HepG2 (cell line): ENCODE measurements at regions of chr3 and their contacts with region 1.

Region 1: GRCh38 chr3:78562328-78562727 is 1205.5 kb downstream of the ROBO1 start:
- DNase-seq: no peak
- ATAC-seq: no peak
- H3K4me3 ChIP-seq: no peak overlapping the region
- H3K27ac ChIP-seq: no peak overlapping the region
- H3K4me1 ChIP-seq: no peaks in the 10 kb centered on the region
- H3K27me3 ChIP-seq: no peaks in the 10 kb centered on the region
- CTCF ChIP-seq: no peak
- EP300 ChIP-seq: no peak
- POLR2A ChIP-seq: no peak
- RAD21 ChIP-seq: no peak

Region 2: DNA sequence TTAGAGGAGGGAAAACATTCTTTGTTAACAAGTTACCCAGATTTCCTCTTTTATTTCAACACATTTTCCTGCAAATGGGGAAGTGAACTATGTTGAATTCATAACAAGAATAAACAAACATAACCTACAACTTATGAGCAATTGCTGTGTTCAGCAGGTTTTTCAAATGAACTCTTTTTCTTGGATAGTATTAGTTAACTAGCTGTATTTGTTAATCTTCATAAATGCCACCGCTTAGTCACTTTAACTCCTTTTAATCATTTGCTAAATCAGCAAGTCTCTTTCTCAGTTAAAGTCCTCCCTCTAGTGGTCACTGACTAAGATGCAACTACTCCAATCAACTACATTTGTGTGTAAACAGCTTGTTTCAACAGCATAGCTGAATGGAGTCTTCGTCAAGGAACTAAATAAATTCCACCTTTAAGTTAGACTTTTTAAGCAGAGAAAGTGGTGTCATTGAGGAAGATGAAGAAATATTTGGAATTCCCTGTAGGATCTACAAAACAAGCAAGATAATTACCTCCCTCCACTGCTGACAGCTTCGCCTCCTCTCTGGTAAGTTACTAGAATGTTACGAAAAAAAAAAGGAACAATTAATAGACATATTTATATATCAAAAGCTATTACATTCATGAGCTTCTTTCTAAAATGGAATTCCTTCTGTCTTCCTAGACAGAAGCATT is 83.4 kb after region 1 on chr3:
- CTCF ChIA-PET with region 1: no interaction called
- POLR2A ChIA-PET with region 1: no interaction called
- in situ Hi-C with region 1: no loop called
- intact Hi-C with region 1: loop called (anchors 1 kb)
- DNase-seq: peak; percentile 78
- ATAC-seq: peak; percentile 84
- H3K4me3 ChIP-seq: no peak overlapping the region
- H3K27ac ChIP-seq: no peak overlapping the region
- H3K4me1 ChIP-seq: no peaks in the 10 kb centered on the region
- H3K27me3 ChIP-seq: no peaks in the 10 kb centered on the region
- CTCF ChIP-seq: peak; percentile 85
- EP300 ChIP-seq: no peak
- POLR2A ChIP-seq: no peak
- RAD21 ChIP-seq: peak; percentile 67; the same call in 1 of the 2 replicates

Region 3: GRCh38 chr3:78825858-78826215 is 263.5 kb after region 1 on chr3:
- CTCF ChIA-PET with region 1: no interaction called
- POLR2A ChIA-PET with region 1: no interaction called
- in situ Hi-C with region 1: no loop called
- intact Hi-C with region 1: no loop called
- DNase-seq: no peak
- ATAC-seq: no peak
- H3K4me3 ChIP-seq: no peak overlapping the region
- H3K27ac ChIP-seq: no peak overlapping the region
- H3K4me1 ChIP-seq: peaks cover 40% of the 10 kb centered on the region
- H3K27me3 ChIP-seq: no peaks in the 10 kb centered on the region
- CTCF ChIP-seq: no peak
- EP300 ChIP-seq: no peak
- POLR2A ChIP-seq: no peak
- RAD21 ChIP-seq: no peak